ENCODE measurements at regions of chr6 and their contacts with region 1.

Region 1: GRCh38 chr6:170554013-170554795 is at the start of gene TBP:
- DNase-seq: peak; percentile 91 to 99 (median 96)
- ATAC-seq: peak; percentile 90
- H3K4me3 ChIP-seq: peak within 1 kb of the TSS; percentile 96
- H3K4me3 Mint-ChIP-seq: no peak within 1 kb of the TSS
- H3K27ac ChIP-seq: peak within 1 kb of the TSS; percentile 93
- H3K27ac Mint-ChIP-seq: no peak within 1 kb of the TSS
- H3K4me1 ChIP-seq: peaks cover 34% of the 10 kb centered on the region
- H3K4me1 Mint-ChIP-seq: peaks cover 27% of the 10 kb centered on the region
- H3K27me3 ChIP-seq: no peaks in the 10 kb centered on the region
- H3K27me3 Mint-ChIP-seq: no peaks in the 10 kb centered on the region
- CTCF ChIP-seq: no peak
- total RNA-seq, gene TBP: 12.6 to 14.1 TPM

Region 2: GRCh38 chr6:169212897-169213813 is 1341.0 kb before region 1 on chr6:
- CTCF ChIA-PET with region 1: no interaction called
- POLR2A ChIA-PET with region 1: interaction called, 3 read pairs
- intact Hi-C with region 1: loop called in 1 of 2 experiments (anchors 5 kb)
- DNase-seq: peak; percentile 77 to 95 (median 85)
- ATAC-seq: peak; percentile 98
- H3K4me3 ChIP-seq: peak overlapping the region; percentile 35
- H3K4me3 Mint-ChIP-seq: peak overlapping the region; percentile 78
- H3K27ac ChIP-seq: no peak overlapping the region
- H3K27ac Mint-ChIP-seq: peak overlapping the region; percentile 79
- H3K4me1 ChIP-seq: peaks cover 12% of the 10 kb centered on the region
- H3K4me1 Mint-ChIP-seq: peaks cover 25% of the 10 kb centered on the region
- H3K27me3 ChIP-seq: no peaks in the 10 kb centered on the region
- H3K27me3 Mint-ChIP-seq: no peaks in the 10 kb centered on the region
- CTCF ChIP-seq: no peak

Region 3: GRCh38 chr6:169751242-169752073 is 802.7 kb before region 1 on chr6 and contains the starts of genes DYNLT2 and ERMARD:
- CTCF ChIA-PET with region 1: no interaction called
- POLR2A ChIA-PET with region 1: interaction called, 67 read pairs
- intact Hi-C with region 1: loop called (anchors 1 kb)
- DNase-seq: peak; percentile 85 to 96 (median 91)
- ATAC-seq: peak; percentile 93
- H3K4me3 ChIP-seq: peak within 1 kb of the TSS; percentile 87
- H3K4me3 Mint-ChIP-seq: peak within 1 kb of the TSS; percentile 99
- H3K27ac ChIP-seq: peak within 1 kb of the TSS; percentile 92 to 94
- H3K27ac Mint-ChIP-seq: peak within 1 kb of the TSS; percentile 100
- H3K4me1 ChIP-seq: peaks cover 14% of the 10 kb centered on the region
- H3K4me1 Mint-ChIP-seq: peaks cover 39% of the 10 kb centered on the region
- H3K27me3 ChIP-seq: no peaks in the 10 kb centered on the region
- H3K27me3 Mint-ChIP-seq: no peaks in the 10 kb centered on the region
- CTCF ChIP-seq: no peak
- total RNA-seq, gene DYNLT2: 4.1 to 4.3 TPM
- total RNA-seq, gene ERMARD: 24.2 to 26.2 TPM

Region 4: DNA sequence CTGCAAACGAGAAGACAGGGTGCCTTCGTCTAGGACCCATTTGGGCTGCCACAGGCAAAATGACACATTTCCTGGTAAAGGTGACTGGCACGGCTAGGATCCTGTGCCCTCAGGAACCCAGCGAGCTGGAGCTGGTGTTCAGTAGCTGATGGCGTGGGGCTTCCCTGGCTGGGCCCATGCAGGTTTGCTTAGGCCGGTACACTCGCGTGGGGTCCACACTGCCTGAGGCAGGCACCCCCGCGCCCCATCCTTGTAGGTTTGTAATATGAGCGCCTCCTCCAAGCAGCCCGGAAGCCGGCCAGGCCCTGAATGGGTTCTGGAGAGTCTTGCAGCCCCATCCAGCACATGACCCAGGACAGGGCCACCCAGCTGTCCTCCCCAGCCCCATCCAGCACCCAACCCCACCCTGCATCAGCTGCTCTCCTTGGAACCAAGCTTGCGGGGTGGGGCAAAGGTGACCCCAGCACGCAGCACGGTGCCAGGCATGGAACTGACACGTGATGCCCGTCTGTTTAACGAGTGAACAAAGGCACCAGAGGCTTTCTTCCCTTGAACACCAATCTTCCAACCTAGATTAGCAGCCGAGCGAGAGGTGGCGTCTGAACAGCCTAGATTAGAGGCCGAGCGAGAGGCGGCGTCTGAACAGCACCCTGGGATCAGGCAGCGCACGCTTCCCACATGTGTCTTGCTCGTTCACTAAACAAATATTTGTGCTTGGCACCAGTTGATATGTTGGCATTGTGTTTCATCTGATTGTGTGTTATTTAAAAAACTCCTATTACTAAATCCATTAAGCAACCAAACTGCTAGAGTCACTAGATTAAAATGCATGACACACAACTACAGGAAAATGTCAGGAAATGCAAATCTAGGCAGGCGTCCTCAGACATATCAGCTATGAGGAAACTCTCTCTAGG is 375.4 kb before region 1 on chr6:
- CTCF ChIA-PET with region 1: no interaction called
- POLR2A ChIA-PET with region 1: no interaction called
- intact Hi-C with region 1: no loop called
- DNase-seq: no peak
- ATAC-seq: no peak
- H3K4me3 ChIP-seq: no peak overlapping the region
- H3K4me3 Mint-ChIP-seq: no peak overlapping the region
- H3K27ac ChIP-seq: no peak overlapping the region
- H3K27ac Mint-ChIP-seq: no peak overlapping the region
- H3K4me1 ChIP-seq: peaks cover 5% of the 10 kb centered on the region
- H3K4me1 Mint-ChIP-seq: peaks cover 5% of the 10 kb centered on the region
- H3K27me3 ChIP-seq: peaks cover 0 to 2% of the 10 kb centered on the region in 2 experiments
- H3K27me3 Mint-ChIP-seq: no peaks in the 10 kb centered on the region
- CTCF ChIP-seq: no peak

Region 5: DNA sequence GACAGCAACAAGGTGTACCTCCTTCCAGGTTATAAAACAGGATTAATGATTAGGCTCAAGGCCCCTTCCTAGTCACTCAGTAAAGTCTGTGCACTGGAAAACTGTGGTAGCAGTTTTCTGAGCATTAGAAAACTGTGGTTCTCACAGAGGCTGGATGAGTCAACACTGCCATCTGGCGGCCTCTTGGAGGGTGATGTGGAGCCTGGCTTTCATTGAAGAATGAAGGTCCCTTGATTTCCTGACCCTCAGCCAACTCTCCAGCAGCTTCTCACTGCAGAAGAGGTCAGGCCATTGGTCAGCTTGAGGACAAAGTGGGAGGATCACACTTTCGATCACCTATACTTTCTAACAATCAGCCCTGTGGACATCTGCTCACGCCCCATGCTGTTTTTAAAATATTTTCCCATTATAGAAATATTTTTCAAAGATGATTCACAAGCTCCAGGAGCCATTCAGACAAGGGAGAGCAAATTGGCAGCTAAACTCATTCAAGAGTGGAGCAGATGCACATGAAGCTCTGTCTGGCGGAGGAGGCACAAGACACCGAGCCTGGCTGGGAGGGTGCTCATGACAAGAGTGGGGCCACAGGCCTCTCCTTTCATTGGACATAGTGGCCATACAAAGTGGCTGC is 24.2 kb before region 1 on chr6:
- CTCF ChIA-PET with region 1: no interaction called
- POLR2A ChIA-PET with region 1: interaction called, 10 read pairs
- intact Hi-C with region 1: no loop called
- DNase-seq: peak; percentile 42 to 79 (median 60)
- ATAC-seq: peak; percentile 69
- H3K4me3 ChIP-seq: no peak overlapping the region
- H3K4me3 Mint-ChIP-seq: no peak overlapping the region
- H3K27ac ChIP-seq: no peak overlapping the region
- H3K27ac Mint-ChIP-seq: no peak overlapping the region
- H3K4me1 ChIP-seq: no peaks in the 10 kb centered on the region
- H3K4me1 Mint-ChIP-seq: peaks cover 5% of the 10 kb centered on the region
- H3K27me3 ChIP-seq: no peaks in the 10 kb centered on the region
- H3K27me3 Mint-ChIP-seq: no peaks in the 10 kb centered on the region
- CTCF ChIP-seq: peak; percentile 73

Region 6: GRCh38 chr6:170584181-170584953 is 30.2 kb after region 1 on chr6 and contains the start of gene PDCD2:
- CTCF ChIA-PET with region 1: interaction called, 9 read pairs
- POLR2A ChIA-PET with region 1: interaction called, 100 read pairs
- intact Hi-C with region 1: loop called (anchors 1 kb)
- DNase-seq: peak; percentile 82 to 96 (median 88)
- ATAC-seq: peak; percentile 94
- H3K4me3 ChIP-seq: peak within 1 kb of the TSS; percentile 74
- H3K4me3 Mint-ChIP-seq: peak within 1 kb of the TSS; percentile 97
- H3K27ac ChIP-seq: peak within 1 kb of the TSS; percentile 69 to 92
- H3K27ac Mint-ChIP-seq: peak within 1 kb of the TSS; percentile 96
- H3K4me1 ChIP-seq: peaks cover 15% of the 10 kb centered on the region
- H3K4me1 Mint-ChIP-seq: peaks cover 38% of the 10 kb centered on the region
- H3K27me3 ChIP-seq: no peaks in the 10 kb centered on the region
- H3K27me3 Mint-ChIP-seq: no peaks in the 10 kb centered on the region
- CTCF ChIP-seq: no peak
- total RNA-seq, gene PDCD2: 56.9 to 57.1 TPM

Measured in CD4-positive, alpha-beta T cell (primary cell).